Activated B cell treated with CpG ODN at 0.5 μM for 24 hours (primary cell): ENCODE measurements at regions of chr13 and their contacts with region 1.

Region 1: DNA sequence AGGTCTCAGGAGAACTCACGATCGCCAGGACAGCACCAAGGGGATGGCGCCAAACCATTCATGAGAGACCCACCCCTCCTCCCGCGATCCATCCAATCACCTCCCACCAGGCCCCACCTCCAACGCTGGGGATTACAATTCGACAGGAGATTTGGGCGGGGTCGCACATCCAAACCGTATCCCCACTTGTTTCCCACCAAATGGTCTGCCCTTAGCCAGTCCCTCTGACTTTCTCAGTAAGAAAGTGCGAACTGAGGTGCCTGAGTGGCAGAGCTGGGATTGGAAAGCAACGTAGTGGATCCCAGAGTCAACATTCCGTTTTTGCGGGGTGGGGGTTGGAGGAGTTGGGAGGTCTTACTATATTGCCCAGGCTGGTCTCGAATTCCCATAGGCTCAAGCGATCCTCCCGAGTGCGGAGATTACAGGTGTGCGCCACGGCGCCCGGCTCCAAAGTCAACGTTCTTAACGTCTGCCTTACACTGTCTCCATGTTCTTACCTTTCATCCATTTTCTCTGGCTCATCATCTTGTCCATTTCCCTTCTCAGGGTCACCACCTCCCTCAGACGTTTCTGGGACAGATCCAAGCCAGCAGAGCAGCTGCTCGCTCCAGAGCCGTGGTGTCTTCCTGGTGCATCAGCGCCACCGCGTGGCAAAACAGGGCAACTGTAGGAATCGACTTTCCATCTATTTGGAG is 102.7 kb upstream of the ABCC4 start:
- DNase-seq: peak; percentile 61
- ATAC-seq: peak; percentile 79
- H3K4me3 Mint-ChIP-seq: peak overlapping the region; percentile 83
- H3K27ac Mint-ChIP-seq: no peak overlapping the region
- H3K4me1 Mint-ChIP-seq: peaks cover 11% of the 10 kb centered on the region
- H3K27me3 Mint-ChIP-seq: peaks cover 21% of the 10 kb centered on the region
- CTCF ChIP-seq: peak; percentile 61

Region 2: GRCh38 chr13:94435604-94436226 is 968.3 kb before region 1 on chr13:
- CTCF ChIA-PET with region 1: interaction called, 5 read pairs
- POLR2A ChIA-PET with region 1: no interaction called
- intact Hi-C with region 1: loop called (anchors 10 kb)
- DNase-seq: no peak
- ATAC-seq: peak; percentile 70
- H3K4me3 Mint-ChIP-seq: no peak overlapping the region
- H3K27ac Mint-ChIP-seq: no peak overlapping the region
- H3K4me1 Mint-ChIP-seq: peaks cover 12% of the 10 kb centered on the region
- H3K27me3 Mint-ChIP-seq: peaks cover 7% of the 10 kb centered on the region
- CTCF ChIP-seq: no peak

Region 3: GRCh38 chr13:95191821-95192563 is 212.0 kb before region 1 on chr13:
- CTCF ChIA-PET with region 1: interaction called, 371 read pairs
- POLR2A ChIA-PET with region 1: interaction called, 5 read pairs
- intact Hi-C with region 1: loop called (anchors 1 kb)
- DNase-seq: peak; percentile 67
- ATAC-seq: peak; percentile 97
- H3K4me3 Mint-ChIP-seq: no peak overlapping the region
- H3K27ac Mint-ChIP-seq: no peak overlapping the region
- H3K4me1 Mint-ChIP-seq: peaks cover 1% of the 10 kb centered on the region
- H3K27me3 Mint-ChIP-seq: no peaks in the 10 kb centered on the region
- CTCF ChIP-seq: no peak

Region 4: GRCh38 chr13:95378603-95379002 is 25.4 kb before region 1 on chr13:
- CTCF ChIA-PET with region 1: interaction called, 35 read pairs
- POLR2A ChIA-PET with region 1: interaction called, 3 read pairs
- intact Hi-C with region 1: loop called (anchors 1 kb)
- DNase-seq: no peak
- ATAC-seq: no peak
- H3K4me3 Mint-ChIP-seq: no peak overlapping the region
- H3K27ac Mint-ChIP-seq: no peak overlapping the region
- H3K4me1 Mint-ChIP-seq: peaks cover 5% of the 10 kb centered on the region
- H3K27me3 Mint-ChIP-seq: peaks cover 32% of the 10 kb centered on the region
- CTCF ChIP-seq: no peak

Region 5: DNA sequence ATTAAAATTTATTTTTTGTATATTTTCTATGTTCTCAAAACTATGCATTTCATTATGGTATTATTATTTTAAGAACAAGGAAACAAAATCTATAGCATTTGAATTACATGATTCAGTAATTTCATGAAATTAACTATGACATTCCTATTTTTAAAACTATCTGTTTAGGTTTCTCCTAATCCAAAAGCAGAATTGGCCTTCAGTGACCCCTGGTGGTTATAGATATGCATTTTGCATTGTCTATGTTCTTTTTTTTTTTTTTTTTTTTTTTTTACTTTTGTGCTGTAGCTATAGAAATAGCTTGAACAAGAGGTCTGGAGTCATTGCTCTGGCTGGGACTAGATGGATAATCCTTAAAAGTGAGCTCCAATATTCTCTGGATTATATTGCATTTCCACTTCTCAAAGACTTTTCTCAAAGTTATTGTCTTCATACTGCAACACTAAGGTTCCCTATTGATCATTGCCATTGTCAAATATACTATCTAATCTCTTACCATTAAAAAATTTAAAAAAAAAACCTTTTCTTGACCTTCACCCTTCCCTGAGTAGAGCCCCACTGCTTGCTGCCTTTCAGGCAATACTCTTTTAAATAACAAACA is 257.1 kb after region 1 on chr13:
- CTCF ChIA-PET with region 1: no interaction called
- POLR2A ChIA-PET with region 1: no interaction called
- intact Hi-C with region 1: loop called (anchors 5 kb)
- DNase-seq: no peak
- ATAC-seq: no peak
- H3K4me3 Mint-ChIP-seq: no peak overlapping the region
- H3K27ac Mint-ChIP-seq: no peak overlapping the region
- H3K4me1 Mint-ChIP-seq: no peaks in the 10 kb centered on the region
- H3K27me3 Mint-ChIP-seq: peaks cover 12% of the 10 kb centered on the region
- CTCF ChIP-seq: no peak